Endothelial cell of umbilical vein (primary cell): ENCODE measurements at regions of chr1 and their contacts with region 1.

Region 1: DNA sequence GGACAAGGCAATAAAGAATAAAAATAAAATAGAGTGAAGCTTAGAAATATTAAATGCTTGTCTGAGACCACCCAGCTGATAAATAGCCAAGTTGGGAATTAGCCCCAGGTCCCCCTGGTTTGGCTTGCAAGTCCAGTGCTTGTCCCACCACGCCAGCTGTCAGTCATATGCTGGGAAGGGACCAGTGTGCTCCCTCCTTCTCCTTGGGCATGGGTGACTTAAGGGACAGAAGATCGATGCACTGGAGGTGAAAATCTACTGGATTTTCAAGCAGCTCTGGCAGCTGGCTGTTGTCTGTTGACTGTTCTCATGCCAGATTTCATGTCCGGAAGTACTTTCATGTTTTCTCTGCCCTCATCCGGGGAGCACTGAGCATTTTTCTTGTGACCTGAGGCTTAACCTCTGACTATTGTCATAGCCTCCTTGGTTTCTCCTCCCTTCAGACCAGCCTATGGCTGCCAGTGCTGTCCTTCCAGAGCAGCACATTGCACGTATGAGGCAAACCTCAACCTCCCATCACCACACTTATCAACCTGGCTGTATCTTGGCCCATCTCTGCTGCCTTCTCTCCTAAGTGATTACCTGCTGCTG is 12.4 kb downstream of the LMOD1 start:
- DNase-seq: no peak
- H3K4me3 ChIP-seq: no peak overlapping the region
- H3K27ac ChIP-seq: no peak overlapping the region
- H3K4me1 ChIP-seq: no peaks in the 10 kb centered on the region
- H3K27me3 ChIP-seq: peaks cover 8 to 11% of the 10 kb centered on the region in 2 experiments
- CTCF ChIP-seq: no peak
- POLR2A ChIP-seq: no peak

Region 2: GRCh38 chr1:201724766-201725118 is 209.2 kb before region 1 on chr1:
- CTCF ChIA-PET with region 1: no interaction called
- POLR2A ChIA-PET with region 1: no interaction called
- dilution Hi-C with region 1: no loop called
- intact Hi-C with region 1: no loop called
- DNase-seq: peak; percentile 56
- H3K4me3 ChIP-seq: no peak overlapping the region
- H3K27ac ChIP-seq: no peak overlapping the region
- H3K4me1 ChIP-seq: no peaks in the 10 kb centered on the region
- H3K27me3 ChIP-seq: no peaks in the 10 kb centered on the region
- CTCF ChIP-seq: no peak
- POLR2A ChIP-seq: no peak

Region 3: DNA sequence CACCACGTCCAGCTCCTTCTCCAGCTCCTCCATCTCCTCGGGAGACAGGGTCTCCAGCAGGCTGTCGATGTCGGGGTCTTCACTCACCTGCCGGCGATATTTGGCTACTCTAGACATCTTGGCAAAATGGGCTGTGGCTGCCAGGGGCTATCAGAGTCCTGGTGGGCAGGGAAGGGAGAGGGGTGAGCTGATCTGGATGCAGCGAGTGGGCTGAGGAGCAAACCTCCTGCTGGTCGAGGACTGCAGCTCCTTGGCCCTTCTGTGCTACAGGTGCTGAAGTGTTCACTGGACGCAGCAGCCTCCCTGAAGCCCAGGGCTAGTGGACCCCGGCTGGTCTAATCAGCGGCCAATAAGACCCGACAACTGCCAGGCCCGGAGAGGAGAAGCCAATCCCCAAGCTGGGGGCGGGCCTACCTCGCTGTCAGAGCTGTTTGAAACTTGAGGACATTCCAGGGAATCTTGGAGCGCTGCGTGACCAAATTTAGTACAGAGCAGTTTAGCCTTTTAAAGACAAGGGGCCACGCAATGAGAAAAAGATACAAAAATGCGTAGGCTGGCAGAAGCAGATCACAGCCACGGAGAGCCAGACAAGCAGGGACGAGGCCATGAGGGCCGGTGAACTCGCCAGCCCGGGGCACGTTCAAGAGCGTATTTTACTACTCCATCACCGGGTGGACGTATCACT is 12.4 kb after region 1 on chr1 and contains the start of gene LMOD1:
- CTCF ChIA-PET with region 1: interaction called, 3 read pairs
- POLR2A ChIA-PET with region 1: interaction called, 3 read pairs
- dilution Hi-C with region 1: no loop called
- intact Hi-C with region 1: loop called (anchors 2 kb)
- DNase-seq: peak; percentile 83
- H3K4me3 ChIP-seq: peak within 1 kb of the TSS in 1 of 3 experiments; percentile 25
- H3K27ac ChIP-seq: no peak within 1 kb of the TSS
- H3K4me1 ChIP-seq: peaks cover 9% of the 10 kb centered on the region
- H3K27me3 ChIP-seq: peaks cover 11 to 13% of the 10 kb centered on the region in 2 experiments
- CTCF ChIP-seq: no peak
- POLR2A ChIP-seq: no peak
- total RNA-seq, gene LMOD1: 0.12 and 0.33 TPM in 2 replicates

Region 4: GRCh38 chr1:201982623-201983379 is 48.9 kb after region 1 on chr1 and contains the start of gene RNPEP:
- CTCF ChIA-PET with region 1: no interaction called
- POLR2A ChIA-PET with region 1: no interaction called
- dilution Hi-C with region 1: no loop called
- intact Hi-C with region 1: no loop called
- DNase-seq: peak; percentile 57
- H3K4me3 ChIP-seq: peak within 1 kb of the TSS; percentile 48 to 98 (median 75)
- H3K27ac ChIP-seq: peak within 1 kb of the TSS; percentile 18
- H3K4me1 ChIP-seq: peaks cover 8% of the 10 kb centered on the region
- H3K27me3 ChIP-seq: no peaks in the 10 kb centered on the region
- CTCF ChIP-seq: no peak
- POLR2A ChIP-seq: peak; percentile 90
- total RNA-seq, gene RNPEP: 65.7 and 73.5 TPM in 2 replicates

Region 5: GRCh38 chr1:202076050-202076511 is 142.1 kb after region 1 on chr1:
- CTCF ChIA-PET with region 1: no interaction called
- POLR2A ChIA-PET with region 1: no interaction called
- dilution Hi-C with region 1: no loop called
- intact Hi-C with region 1: no loop called
- DNase-seq: no peak
- H3K4me3 ChIP-seq: no peak overlapping the region
- H3K27ac ChIP-seq: no peak overlapping the region
- H3K4me1 ChIP-seq: no peaks in the 10 kb centered on the region
- H3K27me3 ChIP-seq: no peaks in the 10 kb centered on the region
- CTCF ChIP-seq: no peak
- POLR2A ChIP-seq: no peak

Region 6: DNA sequence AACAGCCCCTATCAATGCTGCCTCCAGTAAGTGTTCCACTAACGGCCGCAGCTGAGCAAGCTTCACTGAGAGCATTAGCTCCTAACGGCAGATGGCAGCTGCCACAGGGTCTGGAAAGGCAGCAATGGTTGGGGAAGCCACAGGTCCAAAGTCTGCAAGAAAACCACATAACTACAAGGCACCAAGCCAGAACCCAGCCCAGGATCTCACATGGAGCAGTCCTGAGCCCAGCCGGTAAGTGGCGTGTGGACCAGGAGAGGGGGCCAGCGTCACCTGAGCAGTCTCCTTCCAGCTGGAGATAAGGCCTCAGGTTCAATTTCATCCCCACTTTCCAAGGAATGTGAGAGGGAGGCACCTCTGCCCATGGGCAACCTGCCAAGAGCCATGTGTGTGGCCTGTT is 763.1 kb after region 1 on chr1:
- CTCF ChIA-PET with region 1: no interaction called
- POLR2A ChIA-PET with region 1: no interaction called
- dilution Hi-C with region 1: no loop called
- intact Hi-C with region 1: no loop called
- DNase-seq: no peak
- H3K4me3 ChIP-seq: no peak overlapping the region
- H3K27ac ChIP-seq: no peak overlapping the region
- H3K4me1 ChIP-seq: no peaks in the 10 kb centered on the region
- H3K27me3 ChIP-seq: peaks cover 4 to 5% of the 10 kb centered on the region in 2 experiments
- CTCF ChIP-seq: no peak
- POLR2A ChIP-seq: no peak